Activated CD8-positive, alpha-beta memory T cell treated with anti-CD3 and anti-CD28 coated beads, Interleukin-2, amount 10 ng/mL, durations not matched to agents 7 days and 5 days (primary cell): ENCODE measurements at regions of chr10 and their contacts with region 1.

Region 1: DNA sequence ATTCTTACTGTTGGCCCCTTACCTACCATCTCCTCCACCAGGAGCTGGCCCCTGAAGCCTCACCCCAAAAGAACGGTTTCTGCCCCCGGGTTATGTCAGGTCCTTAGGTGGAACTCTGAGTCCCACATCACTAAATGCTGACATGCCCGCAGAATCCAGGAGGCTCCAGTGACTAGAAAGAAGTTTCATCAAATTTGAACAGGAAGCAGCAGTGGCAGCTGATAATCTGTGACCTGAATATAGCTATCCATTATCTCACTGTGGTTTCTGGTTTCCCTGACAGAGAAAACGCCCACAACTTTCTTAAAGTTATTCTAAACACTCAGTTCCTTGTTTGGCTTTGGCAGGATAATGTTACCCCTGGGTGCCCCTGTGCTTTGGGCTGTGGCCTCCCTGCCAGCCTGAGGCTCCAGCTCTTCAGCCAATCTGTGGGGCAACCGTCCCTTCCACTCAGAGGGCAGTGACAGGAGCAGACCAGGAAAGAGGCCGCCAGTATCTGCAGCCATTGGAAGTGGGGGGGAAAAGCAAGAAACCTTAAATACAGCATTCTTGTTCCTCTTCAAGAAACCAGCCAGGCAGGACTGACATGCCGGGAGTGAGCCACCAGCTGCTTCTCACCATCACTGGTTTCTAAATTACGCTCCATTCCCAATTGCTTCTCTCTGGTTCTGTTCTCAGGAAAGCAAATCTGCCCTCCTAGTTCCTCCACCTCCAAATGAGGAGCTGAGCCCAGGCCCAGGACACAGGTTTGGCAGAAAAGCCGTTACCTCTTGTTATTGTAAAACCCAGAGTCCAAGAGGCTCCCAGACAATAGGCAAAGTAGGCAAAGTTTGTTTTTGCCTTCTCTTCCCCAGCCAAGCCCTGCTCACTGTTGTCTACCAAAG is 41.2 kb upstream of the VCL start:
- DNase-seq: peak; percentile 57
- ATAC-seq: peak; percentile 77
- H3K4me3 Mint-ChIP-seq: peak overlapping the region; percentile 31
- H3K27ac Mint-ChIP-seq: peak overlapping the region; percentile 90
- H3K4me1 Mint-ChIP-seq: peaks cover 48% of the 10 kb centered on the region
- H3K27me3 Mint-ChIP-seq: peaks cover 2% of the 10 kb centered on the region

Region 2: GRCh38 chr10:73974309-73974946 is 17.7 kb after region 1 on chr10:
- CTCF ChIA-PET with region 1: interaction called, 33 read pairs
- DNase-seq: no peak
- ATAC-seq: peak; percentile 72
- H3K4me3 Mint-ChIP-seq: peak overlapping the region; percentile 6
- H3K27ac Mint-ChIP-seq: peak overlapping the region; percentile 11
- H3K4me1 Mint-ChIP-seq: peaks cover 18% of the 10 kb centered on the region
- H3K27me3 Mint-ChIP-seq: peaks cover 22% of the 10 kb centered on the region

Region 3: GRCh38 chr10:73991884-73992245 is 35.1 kb after region 1 on chr10:
- CTCF ChIA-PET with region 1: interaction called, 23 read pairs
- DNase-seq: peak; percentile 97
- ATAC-seq: peak; percentile 100
- H3K4me3 Mint-ChIP-seq: no peak overlapping the region
- H3K27ac Mint-ChIP-seq: peak overlapping the region; percentile 76
- H3K4me1 Mint-ChIP-seq: peaks cover 42% of the 10 kb centered on the region
- H3K27me3 Mint-ChIP-seq: no peaks in the 10 kb centered on the region

Region 4: DNA sequence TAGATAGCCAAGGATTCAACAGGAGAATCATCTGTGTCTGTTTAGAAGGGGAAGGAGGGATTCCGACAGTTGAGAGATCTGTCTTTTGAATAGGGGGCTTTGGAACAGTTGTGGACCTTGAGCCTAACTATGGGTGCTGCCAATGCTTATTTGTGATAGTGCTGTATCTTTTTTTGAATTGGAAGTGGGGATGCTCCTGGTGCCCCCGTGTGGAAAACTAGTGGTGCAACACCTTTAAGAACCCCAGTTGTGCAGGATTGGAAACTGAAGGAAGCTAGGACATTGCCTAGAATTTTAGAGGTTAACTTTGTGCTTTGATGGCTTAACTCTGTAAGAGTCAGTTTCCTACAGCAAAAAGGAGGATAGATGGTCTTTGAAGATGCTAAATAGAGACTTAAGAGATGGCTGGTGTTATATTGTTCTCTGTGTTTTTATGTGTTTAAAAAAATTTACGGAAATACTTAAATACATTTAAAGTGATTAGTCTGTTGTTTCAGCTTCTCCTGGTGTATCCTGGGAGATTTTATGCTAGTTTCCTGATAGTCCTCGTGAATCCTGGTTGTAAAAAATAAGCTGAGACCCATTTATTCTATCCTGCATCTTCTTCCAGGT is 124.6 kb after region 1 on chr10:
- CTCF ChIA-PET with region 1: interaction called, 10 read pairs
- DNase-seq: peak; percentile 58
- ATAC-seq: peak; percentile 34
- H3K4me3 Mint-ChIP-seq: no peak overlapping the region
- H3K27ac Mint-ChIP-seq: no peak overlapping the region
- H3K4me1 Mint-ChIP-seq: peaks cover 53% of the 10 kb centered on the region
- H3K27me3 Mint-ChIP-seq: no peaks in the 10 kb centered on the region

Region 5: GRCh38 chr10:74507951-74508350 is 551.2 kb after region 1 on chr10:
- CTCF ChIA-PET with region 1: no interaction called
- DNase-seq: no peak
- ATAC-seq: no peak
- H3K4me3 Mint-ChIP-seq: no peak overlapping the region
- H3K27ac Mint-ChIP-seq: no peak overlapping the region
- H3K4me1 Mint-ChIP-seq: peaks cover 9% of the 10 kb centered on the region
- H3K27me3 Mint-ChIP-seq: no peaks in the 10 kb centered on the region